Endothelial cell of umbilical vein (primary cell): ENCODE measurements at regions of chr11 and their contacts with region 1.

Region 1: GRCh38 chr11:59802639-59803176 is 7.9 kb downstream of the MRPL16 start:
- DNase-seq: peak; percentile 79
- H3K4me3 ChIP-seq: no peak overlapping the region
- H3K27ac ChIP-seq: peak overlapping the region; percentile 83
- H3K4me1 ChIP-seq: peaks cover 9% of the 10 kb centered on the region
- H3K27me3 ChIP-seq: no peaks in the 10 kb centered on the region
- CTCF ChIP-seq: peak; percentile 34 to 47
- POLR2A ChIP-seq: no peak

Region 2: DNA sequence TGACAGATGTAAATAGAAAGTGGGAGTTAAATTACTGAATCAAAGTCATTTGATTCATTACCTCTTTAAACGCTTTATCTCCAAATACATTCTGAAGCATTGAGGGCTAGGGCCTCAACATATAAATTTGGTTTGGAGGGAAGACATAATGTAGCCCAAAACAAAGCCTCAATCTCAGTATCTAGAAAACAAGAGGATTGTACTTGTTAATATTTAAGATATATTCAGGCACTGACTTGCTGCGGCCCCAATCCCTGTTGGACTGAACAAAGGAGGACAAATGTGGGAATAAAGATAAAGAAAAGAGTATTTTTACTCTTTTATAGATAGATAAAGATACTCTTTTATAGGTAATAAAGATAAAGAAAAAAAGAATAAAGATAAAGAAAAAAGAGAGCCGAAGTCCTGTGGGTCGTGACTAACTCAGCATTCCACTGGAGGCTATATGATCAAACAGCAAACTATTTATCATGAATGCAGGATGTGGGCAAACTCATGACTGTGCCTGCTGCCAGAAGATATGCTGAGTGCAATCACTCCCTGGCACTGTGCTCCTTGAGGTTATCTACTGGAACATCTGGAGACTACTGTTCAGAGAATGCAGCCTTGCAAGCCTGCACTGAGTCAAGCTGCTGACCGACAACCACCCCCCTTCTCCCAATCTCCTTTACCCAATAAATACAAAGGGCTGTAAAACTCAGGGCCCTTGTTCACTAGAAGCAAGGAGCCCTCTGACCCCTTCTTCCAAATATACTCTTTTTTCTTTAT is 96.0 kb before region 1 on chr11:
- CTCF ChIA-PET with region 1: no interaction called
- POLR2A ChIA-PET with region 1: no interaction called
- dilution Hi-C with region 1: no loop called
- intact Hi-C with region 1: loop called (anchors 1 kb)
- DNase-seq: peak; percentile 95
- H3K4me3 ChIP-seq: no peak overlapping the region
- H3K27ac ChIP-seq: peak overlapping the region; percentile 93
- H3K4me1 ChIP-seq: peaks cover 18% of the 10 kb centered on the region
- H3K27me3 ChIP-seq: no peaks in the 10 kb centered on the region
- CTCF ChIP-seq: no peak
- POLR2A ChIP-seq: peak; percentile 86

Region 3: GRCh38 chr11:59767225-59767611 is 35.5 kb before region 1 on chr11:
- CTCF ChIA-PET with region 1: interaction called, 13 read pairs
- POLR2A ChIA-PET with region 1: no interaction called
- dilution Hi-C with region 1: no loop called
- intact Hi-C with region 1: no loop called
- DNase-seq: no peak
- H3K4me3 ChIP-seq: no peak overlapping the region
- H3K27ac ChIP-seq: no peak overlapping the region
- H3K4me1 ChIP-seq: peaks cover 9% of the 10 kb centered on the region
- H3K27me3 ChIP-seq: no peaks in the 10 kb centered on the region
- CTCF ChIP-seq: no peak
- POLR2A ChIP-seq: no peak

Region 4: DNA sequence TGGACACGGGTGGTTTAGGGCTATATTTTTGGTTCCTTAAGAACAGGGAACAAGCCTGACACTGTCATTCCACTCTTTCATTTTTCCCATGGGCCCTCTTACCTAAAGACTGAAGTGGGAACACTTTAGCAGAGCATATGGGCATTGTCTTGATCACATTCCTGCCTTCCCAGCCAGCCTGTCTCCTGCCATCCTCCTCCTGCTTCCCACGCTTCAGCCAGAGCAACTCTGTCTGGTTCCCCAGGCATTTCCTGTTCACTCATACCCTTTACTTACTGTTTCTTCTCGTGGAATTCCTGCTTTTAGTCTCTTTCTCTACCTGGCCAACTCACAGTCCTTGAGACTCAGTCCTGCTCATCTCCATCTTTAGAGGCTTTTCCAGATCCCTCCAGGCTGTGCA is 14.9 kb before region 1 on chr11:
- CTCF ChIA-PET with region 1: interaction called, 31 read pairs
- POLR2A ChIA-PET with region 1: no interaction called
- dilution Hi-C with region 1: no loop called
- intact Hi-C with region 1: loop called (anchors 1 kb)
- DNase-seq: peak; percentile 84
- H3K4me3 ChIP-seq: no peak overlapping the region
- H3K27ac ChIP-seq: peak overlapping the region; percentile 86
- H3K4me1 ChIP-seq: peaks cover 27% of the 10 kb centered on the region
- H3K27me3 ChIP-seq: no peaks in the 10 kb centered on the region
- CTCF ChIP-seq: no peak
- POLR2A ChIP-seq: no peak